ENCODE measurements at regions of chr5 and their contacts with region 1.

Region 1: GRCh38 chr5:127290019-127290945 is at the start of gene MEGF10:
- DNase-seq: peak; percentile 44 to 50
- H3K4me3 ChIP-seq: no peak within 1 kb of the TSS
- H3K27ac ChIP-seq: no peak within 1 kb of the TSS
- H3K4me1 ChIP-seq: peaks cover 6 to 11% of the 10 kb centered on the region in 2 donors
- H3K27me3 ChIP-seq: no peaks in the 10 kb centered on the region
- CTCF ChIP-seq: peak in 5 of 6 experiments; percentile 21 to 79 (median 62)
- POLR2A ChIP-seq: no peak
- total RNA-seq, gene MEGF10: under 0.01 to 2.3 (median 0.42) TPM in 3 of 4 donors, not detected in the other

Region 2: GRCh38 chr5:127492854-127493738 is 202.8 kb after region 1 on chr5:
- intact Hi-C with region 1: loop called (anchors 5 kb)
- DNase-seq: no peak
- H3K4me3 ChIP-seq: no peak overlapping the region
- H3K27ac ChIP-seq: no peak overlapping the region
- H3K4me1 ChIP-seq: no peaks in the 10 kb centered on the region
- H3K27me3 ChIP-seq: no peaks in the 10 kb centered on the region
- CTCF ChIP-seq: peak; percentile 26 to 93 (median 66)
- POLR2A ChIP-seq: no peak